Activated naive CD4-positive, alpha-beta T cell treated with anti-CD3 and anti-CD28 coated beads for 36 hours (primary cell): ENCODE measurements at regions of chr17 and their contacts with region 1.

Region 1: GRCh38 chr17:29293890-29294579 is at the start of gene NUFIP2:
- DNase-seq: peak; percentile 99
- H3K4me3 Mint-ChIP-seq: peak within 1 kb of the TSS; percentile 100
- H3K27ac Mint-ChIP-seq: peak within 1 kb of the TSS; percentile 99
- H3K4me1 Mint-ChIP-seq: peaks cover 25% of the 10 kb centered on the region
- H3K27me3 Mint-ChIP-seq: no peaks in the 10 kb centered on the region
- total RNA-seq, gene NUFIP2: 51.0 to 57.8 TPM

Region 2: DNA sequence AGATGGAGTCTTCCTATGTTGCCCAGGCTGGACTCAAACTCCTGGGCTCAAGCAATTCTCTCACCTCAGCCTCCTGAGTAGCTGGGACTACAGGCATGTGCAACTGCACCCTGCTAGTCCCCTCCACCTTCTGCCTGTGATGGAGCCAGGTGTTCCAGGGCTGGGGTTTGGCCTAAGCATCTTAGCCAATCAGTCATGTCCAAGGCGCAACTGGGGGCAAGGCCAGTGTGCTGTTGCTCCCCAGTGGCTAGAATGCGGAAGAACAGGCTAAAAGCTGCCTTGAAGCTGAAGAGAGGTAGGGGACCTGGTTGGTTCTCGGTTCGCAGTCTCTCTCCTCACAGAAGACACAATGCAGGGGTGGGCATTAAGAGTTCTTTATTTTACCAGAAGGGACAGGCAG is 415.1 kb before region 1 on chr17:
- CTCF ChIA-PET with region 1: no interaction called
- intact Hi-C with region 1: no loop called
- DNase-seq: peak; percentile 55
- H3K4me3 Mint-ChIP-seq: no peak overlapping the region
- H3K27ac Mint-ChIP-seq: peak overlapping the region; percentile 8
- H3K4me1 Mint-ChIP-seq: peaks cover 37% of the 10 kb centered on the region
- H3K27me3 Mint-ChIP-seq: no peaks in the 10 kb centered on the region

Region 3: GRCh38 chr17:29140051-29140621 is 153.9 kb before region 1 on chr17:
- CTCF ChIA-PET with region 1: interaction called, 7 read pairs
- intact Hi-C with region 1: loop called (anchors 1 kb)
- DNase-seq: peak; percentile 89
- H3K4me3 Mint-ChIP-seq: peak overlapping the region; percentile 83
- H3K27ac Mint-ChIP-seq: peak overlapping the region; percentile 93
- H3K4me1 Mint-ChIP-seq: peaks cover 66% of the 10 kb centered on the region
- H3K27me3 Mint-ChIP-seq: no peaks in the 10 kb centered on the region

Region 4: GRCh38 chr17:29241015-29241963 is 52.7 kb before region 1 on chr17:
- CTCF ChIA-PET with region 1: interaction called, 3 read pairs
- intact Hi-C with region 1: loop called (anchors 1 kb)
- DNase-seq: peak; percentile 66
- H3K4me3 Mint-ChIP-seq: no peak overlapping the region
- H3K27ac Mint-ChIP-seq: no peak overlapping the region
- H3K4me1 Mint-ChIP-seq: peaks cover 14% of the 10 kb centered on the region
- H3K27me3 Mint-ChIP-seq: no peaks in the 10 kb centered on the region

Region 5: DNA sequence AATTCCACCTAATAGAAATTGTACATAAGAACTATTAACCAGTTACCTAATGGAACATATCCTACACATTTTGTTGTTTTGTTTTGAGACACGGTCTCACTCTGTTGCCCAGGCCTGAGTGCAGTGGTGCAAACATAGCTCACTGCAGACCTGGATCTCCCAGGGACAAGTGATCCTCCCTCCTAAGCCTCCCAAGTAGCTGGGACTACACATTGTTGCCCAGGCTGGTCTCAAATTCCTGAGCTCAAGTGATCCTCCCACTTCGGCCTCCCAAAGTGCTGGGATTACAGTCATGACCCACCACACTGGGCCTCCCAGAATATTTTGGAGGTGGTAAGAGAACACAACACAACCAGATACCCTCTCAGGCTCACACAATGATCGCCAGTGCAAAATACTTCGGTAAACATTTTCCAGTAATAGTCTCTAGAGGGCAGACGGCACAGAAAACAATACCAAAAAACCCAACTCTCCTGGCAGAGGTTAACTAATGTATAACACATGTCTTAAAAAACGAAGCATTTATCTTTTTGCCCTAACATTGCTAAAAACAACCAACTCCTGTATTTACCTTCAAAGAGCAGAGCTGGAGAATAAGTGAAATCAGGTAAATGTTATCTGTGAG is 10.7 kb before region 1 on chr17:
- CTCF ChIA-PET with region 1: interaction called, 12 read pairs
- intact Hi-C with region 1: no loop called
- DNase-seq: no peak
- H3K4me3 Mint-ChIP-seq: no peak overlapping the region
- H3K27ac Mint-ChIP-seq: no peak overlapping the region
- H3K4me1 Mint-ChIP-seq: peaks cover 72% of the 10 kb centered on the region
- H3K27me3 Mint-ChIP-seq: no peaks in the 10 kb centered on the region

Region 6: GRCh38 chr17:29344311-29344843 is 50.3 kb after region 1 on chr17:
- CTCF ChIA-PET with region 1: no interaction called
- intact Hi-C with region 1: no loop called
- DNase-seq: no peak
- H3K4me3 Mint-ChIP-seq: no peak overlapping the region
- H3K27ac Mint-ChIP-seq: no peak overlapping the region
- H3K4me1 Mint-ChIP-seq: no peaks in the 10 kb centered on the region
- H3K27me3 Mint-ChIP-seq: no peaks in the 10 kb centered on the region

Region 7: GRCh38 chr17:29568331-29569244 is 274.6 kb after region 1 on chr17 and contains the start of gene TP53I13:
- CTCF ChIA-PET with region 1: interaction called, 6 read pairs
- intact Hi-C with region 1: loop called (anchors 1 kb)
- DNase-seq: peak; percentile 91
- H3K4me3 Mint-ChIP-seq: peak within 1 kb of the TSS; percentile 94
- H3K27ac Mint-ChIP-seq: peak within 1 kb of the TSS; percentile 88
- H3K4me1 Mint-ChIP-seq: peaks cover 12% of the 10 kb centered on the region
- H3K27me3 Mint-ChIP-seq: no peaks in the 10 kb centered on the region
- total RNA-seq, gene TP53I13: 30.9 to 37.2 TPM

Region 8: DNA sequence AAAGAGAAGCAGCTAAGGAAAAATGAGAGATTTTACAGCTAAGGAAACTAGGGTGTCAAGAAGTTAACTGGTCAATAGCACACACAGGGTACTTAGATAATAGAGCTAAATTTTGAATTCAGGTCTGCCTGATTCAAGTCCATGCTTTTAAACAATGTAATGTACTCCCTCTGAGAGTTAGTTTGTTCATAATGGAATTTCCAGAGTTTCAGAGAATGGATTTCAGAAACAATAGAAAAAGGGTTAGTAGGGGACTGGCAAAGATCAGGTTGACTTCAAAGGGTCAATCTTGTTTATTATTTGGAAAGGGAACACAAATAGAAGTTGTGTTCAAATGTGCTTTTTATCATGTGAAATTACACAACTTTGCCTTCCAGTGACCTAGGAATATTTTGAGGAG is 840.5 kb after region 1 on chr17:
- CTCF ChIA-PET with region 1: no interaction called
- intact Hi-C with region 1: no loop called
- DNase-seq: no peak
- H3K4me3 Mint-ChIP-seq: no peak overlapping the region
- H3K27ac Mint-ChIP-seq: no peak overlapping the region
- H3K4me1 Mint-ChIP-seq: peaks cover 18% of the 10 kb centered on the region
- H3K27me3 Mint-ChIP-seq: no peaks in the 10 kb centered on the region